Gastrocnemius medialis (tissue), 4 donors: ENCODE measurements at regions of chr3 and their contacts with region 1.

Region 1: DNA sequence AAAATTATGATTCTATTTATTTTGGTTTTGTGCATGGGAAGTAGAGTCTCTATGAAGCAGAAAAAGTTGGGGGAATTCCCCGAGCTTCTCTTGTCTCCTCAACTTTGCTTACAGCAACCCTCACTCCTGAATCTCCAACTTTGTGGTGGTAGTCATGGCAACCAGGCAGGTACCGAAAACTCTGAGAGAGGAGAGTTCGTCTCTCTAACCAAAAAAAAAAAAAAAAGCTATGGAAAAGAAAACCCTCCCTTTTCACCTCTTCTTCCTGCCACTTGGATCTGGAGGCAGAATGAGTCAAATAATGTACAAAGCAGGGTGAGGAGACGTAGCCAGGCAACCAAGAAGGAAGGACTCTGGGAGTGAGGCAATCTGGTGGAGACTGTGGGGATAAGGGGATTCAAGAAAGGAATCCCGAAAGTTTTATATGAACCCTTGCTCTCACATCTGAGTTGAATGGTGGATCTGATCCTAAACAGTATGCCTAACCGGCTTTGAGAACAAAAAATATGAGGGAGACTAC is 108.1 kb downstream of the PLOD2 start:
- DNase-seq: no peak
- ATAC-seq: no peak
- H3K4me3 ChIP-seq: no peak overlapping the region
- H3K27ac ChIP-seq: no peak overlapping the region
- H3K4me1 ChIP-seq: no peaks in the 10 kb centered on the region
- H3K27me3 ChIP-seq: no peaks in the 10 kb centered on the region
- CTCF ChIP-seq: no peak
- POLR2A ChIP-seq: no peak

Region 2: DNA sequence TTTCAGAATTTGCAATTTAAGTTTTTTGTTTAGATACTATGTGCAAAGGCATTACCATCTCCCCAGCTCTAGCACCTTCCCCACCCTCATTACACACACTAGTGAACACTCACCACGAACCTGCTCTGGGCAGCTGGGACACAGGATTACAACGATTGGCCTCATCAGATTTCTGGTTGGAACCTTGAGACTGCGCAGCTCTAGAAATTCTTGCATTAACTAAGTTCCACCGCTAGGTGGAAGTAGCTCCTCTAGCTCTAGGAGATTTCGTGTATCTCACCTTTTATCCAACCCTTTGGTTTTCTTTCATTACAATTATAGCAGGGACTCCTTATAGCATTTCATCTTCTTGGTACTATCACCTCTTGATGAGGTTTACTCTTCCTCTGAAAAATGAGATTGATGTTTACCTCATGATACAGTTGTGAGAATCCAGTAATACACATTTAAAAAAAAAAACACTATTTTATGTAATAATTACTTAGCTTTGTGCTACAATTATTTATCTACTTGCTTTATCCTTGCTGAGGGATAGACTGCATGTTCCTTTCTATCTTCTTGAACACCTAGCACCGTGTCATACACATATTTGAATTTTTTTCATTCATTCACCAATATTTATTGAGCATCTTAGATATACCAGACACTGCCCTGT is 136.8 kb after region 1 on chr3:
- in situ Hi-C with region 1: loop called in 1 of 4 experiments (anchors 10 kb)
- intact Hi-C with region 1: no loop called
- DNase-seq: no peak
- ATAC-seq: peak in 1 of 2 donors; percentile 69
- H3K4me3 ChIP-seq: no peak overlapping the region
- H3K27ac ChIP-seq: no peak overlapping the region
- H3K4me1 ChIP-seq: no peaks in the 10 kb centered on the region
- H3K27me3 ChIP-seq: no peaks in the 10 kb centered on the region
- CTCF ChIP-seq: peak; percentile 39 to 75 (median 55)
- POLR2A ChIP-seq: no peak